PC-3 (cell line): ENCODE measurements at regions of chr4 and their contacts with region 1.

Region 1: DNA sequence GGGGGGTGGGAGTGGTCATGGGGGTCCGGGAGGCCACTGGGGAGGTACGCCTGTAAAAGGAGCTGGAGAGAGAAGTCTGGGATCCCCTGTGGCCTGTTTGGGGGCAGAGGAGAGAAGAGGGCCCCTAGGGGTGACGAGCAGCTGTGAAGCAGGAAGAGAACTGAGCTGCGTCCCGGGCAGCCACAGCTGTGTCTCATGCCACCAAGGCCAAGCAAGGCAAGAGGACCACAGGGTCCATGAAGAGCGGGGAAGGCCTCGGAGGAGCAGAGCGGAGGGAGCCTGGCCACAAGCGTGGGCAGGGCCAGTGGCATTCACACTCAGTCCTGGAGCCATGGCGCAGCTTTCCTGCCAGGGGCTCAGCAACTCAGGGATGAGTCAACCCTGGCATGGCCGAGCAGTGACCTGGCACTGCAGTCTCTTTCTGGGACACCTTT is 13.6 kb upstream of the NAT8L start:
- DNase-seq: peak; percentile 57
- ATAC-seq: peak; percentile 72
- H3K4me3 ChIP-seq: no peak overlapping the region
- H3K27ac ChIP-seq: no peak overlapping the region
- H3K4me1 ChIP-seq: peaks cover 7% of the 10 kb centered on the region; the same call in 1 of the 2 replicates
- H3K27me3 ChIP-seq: no peaks in the 10 kb centered on the region
- CTCF ChIP-seq: no peak

Region 2: DNA sequence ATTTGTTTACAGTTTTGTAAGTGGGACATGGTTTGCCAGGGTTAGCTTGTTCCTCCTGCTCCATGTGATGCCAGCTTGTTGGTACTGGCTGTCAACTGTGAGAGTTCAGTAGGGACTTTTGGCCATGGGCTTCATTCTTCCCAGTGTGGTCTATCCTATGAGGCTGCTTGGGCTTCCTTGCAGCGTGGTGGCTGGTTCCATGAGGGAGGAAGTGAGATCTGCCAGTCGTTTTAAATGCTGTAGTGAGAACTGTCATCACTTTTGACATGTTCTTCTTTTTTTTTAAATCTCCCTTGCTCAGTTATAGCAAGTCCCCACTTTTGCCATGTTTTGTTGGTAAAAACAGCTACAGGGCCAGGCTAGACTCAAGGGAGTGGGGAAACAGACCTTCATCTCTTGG is 158.5 kb before region 1 on chr4:
- CTCF ChIA-PET with region 1: no interaction called
- POLR2A ChIA-PET with region 1: no interaction called
- intact Hi-C with region 1: no loop called
- DNase-seq: no peak
- ATAC-seq: no peak
- H3K4me3 ChIP-seq: no peak overlapping the region
- H3K27ac ChIP-seq: no peak overlapping the region
- H3K4me1 ChIP-seq: no peaks in the 10 kb centered on the region
- H3K27me3 ChIP-seq: no peaks in the 10 kb centered on the region
- CTCF ChIP-seq: no peak

Region 3: DNA sequence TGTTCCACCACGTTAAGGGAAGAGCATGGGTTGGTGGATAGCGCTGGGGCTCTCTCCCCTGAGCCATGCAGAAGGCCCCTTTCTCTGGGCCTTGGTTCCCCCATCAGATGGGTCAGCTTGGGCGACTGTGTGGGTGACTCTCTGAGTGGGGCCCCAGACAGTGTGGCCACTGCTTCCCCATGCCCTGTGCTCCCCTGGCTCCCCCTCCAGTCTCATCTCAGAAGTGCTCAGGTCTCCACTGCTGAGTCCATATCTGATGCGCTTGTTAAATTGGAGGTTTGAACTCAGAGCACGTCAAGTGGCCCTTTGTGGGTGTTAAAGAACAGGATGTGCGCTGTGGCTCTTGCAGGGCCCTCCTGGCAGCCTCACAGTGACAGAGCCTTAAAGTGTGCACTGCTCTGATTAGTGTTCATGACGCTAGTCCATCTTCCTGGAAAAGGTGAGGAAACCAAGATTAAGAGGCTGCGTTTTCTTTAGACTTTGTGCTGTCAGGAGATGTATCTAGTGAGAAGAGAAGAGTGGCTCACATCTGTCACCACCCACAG is 96.6 kb before region 1 on chr4:
- CTCF ChIA-PET with region 1: no interaction called
- POLR2A ChIA-PET with region 1: interaction called, 10 read pairs
- intact Hi-C with region 1: no loop called
- DNase-seq: no peak
- ATAC-seq: no peak; the same call in 1 of the 2 replicates
- H3K4me3 ChIP-seq: no peak overlapping the region
- H3K27ac ChIP-seq: no peak overlapping the region
- H3K4me1 ChIP-seq: no peaks in the 10 kb centered on the region
- H3K27me3 ChIP-seq: no peaks in the 10 kb centered on the region
- CTCF ChIP-seq: no peak

Region 4: DNA sequence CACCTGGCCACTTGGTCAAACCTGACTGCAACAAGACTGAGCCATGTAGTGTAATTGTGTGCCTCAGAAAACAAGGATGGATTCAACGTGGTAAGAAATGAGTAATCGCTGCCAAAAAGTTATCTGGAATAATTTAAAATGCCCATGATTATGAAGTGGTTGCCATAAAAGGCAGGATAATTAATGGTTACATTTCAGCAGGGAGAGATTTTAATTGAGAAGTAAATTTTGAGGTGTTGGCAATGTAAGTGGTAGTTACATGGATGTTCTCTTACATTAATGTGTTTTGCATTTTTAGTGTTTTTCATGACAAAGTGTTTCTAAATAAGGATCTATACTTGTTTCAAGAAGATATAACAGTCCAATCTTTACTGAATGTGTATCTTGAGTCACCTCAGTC is 180.7 kb after region 1 on chr4:
- CTCF ChIA-PET with region 1: no interaction called
- POLR2A ChIA-PET with region 1: interaction called, 15 read pairs
- intact Hi-C with region 1: no loop called
- DNase-seq: no peak
- ATAC-seq: no peak
- H3K4me3 ChIP-seq: no peak overlapping the region
- H3K27ac ChIP-seq: no peak overlapping the region
- H3K4me1 ChIP-seq: peaks cover 10% of the 10 kb centered on the region; the same call in 1 of the 2 replicates
- H3K27me3 ChIP-seq: no peaks in the 10 kb centered on the region
- CTCF ChIP-seq: no peak

Region 5: DNA sequence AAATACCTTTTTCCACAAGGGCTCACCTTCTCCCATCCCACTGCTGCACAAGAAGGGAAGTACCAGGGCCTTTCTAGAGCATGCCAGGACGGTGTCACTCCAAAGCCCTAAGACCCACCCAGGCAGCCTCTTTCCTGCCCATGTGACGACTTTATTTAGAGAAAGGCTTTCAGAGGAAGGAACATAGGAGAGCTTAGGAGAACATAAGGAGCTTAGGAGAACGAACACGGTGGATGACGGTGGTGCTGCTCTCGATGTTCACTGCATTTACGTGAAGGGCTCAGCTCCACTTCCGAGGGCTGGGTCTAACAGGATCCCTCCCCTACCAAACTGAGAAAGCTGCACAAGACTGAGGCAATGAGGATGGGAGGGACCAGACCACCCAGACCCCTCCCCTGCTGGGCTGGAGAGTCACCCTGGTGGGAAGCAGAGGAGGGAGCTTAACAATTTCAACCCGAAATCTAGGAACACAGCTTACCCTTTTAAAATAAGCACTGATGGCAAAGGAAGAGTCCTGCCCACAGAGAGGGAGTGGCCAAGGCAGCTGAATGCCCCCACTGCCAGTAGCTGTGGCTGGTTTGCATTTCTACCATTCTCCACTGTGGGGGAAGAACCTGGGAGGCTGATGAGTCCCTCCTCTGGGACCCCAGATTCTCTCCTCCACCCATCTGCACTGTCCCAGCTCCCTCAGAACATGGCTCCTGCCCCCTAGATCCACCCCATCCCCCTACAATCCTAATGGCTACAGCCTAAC is 343.1 kb after region 1 on chr4:
- CTCF ChIA-PET with region 1: no interaction called
- POLR2A ChIA-PET with region 1: no interaction called
- intact Hi-C with region 1: no loop called
- DNase-seq: no peak
- ATAC-seq: no peak
- H3K4me3 ChIP-seq: no peak overlapping the region
- H3K27ac ChIP-seq: no peak overlapping the region
- H3K4me1 ChIP-seq: no peaks in the 10 kb centered on the region
- H3K27me3 ChIP-seq: no peaks in the 10 kb centered on the region
- CTCF ChIP-seq: no peak